ENCODE measurements at regions of chr13 and their contacts with region 1.

Region 1: DNA sequence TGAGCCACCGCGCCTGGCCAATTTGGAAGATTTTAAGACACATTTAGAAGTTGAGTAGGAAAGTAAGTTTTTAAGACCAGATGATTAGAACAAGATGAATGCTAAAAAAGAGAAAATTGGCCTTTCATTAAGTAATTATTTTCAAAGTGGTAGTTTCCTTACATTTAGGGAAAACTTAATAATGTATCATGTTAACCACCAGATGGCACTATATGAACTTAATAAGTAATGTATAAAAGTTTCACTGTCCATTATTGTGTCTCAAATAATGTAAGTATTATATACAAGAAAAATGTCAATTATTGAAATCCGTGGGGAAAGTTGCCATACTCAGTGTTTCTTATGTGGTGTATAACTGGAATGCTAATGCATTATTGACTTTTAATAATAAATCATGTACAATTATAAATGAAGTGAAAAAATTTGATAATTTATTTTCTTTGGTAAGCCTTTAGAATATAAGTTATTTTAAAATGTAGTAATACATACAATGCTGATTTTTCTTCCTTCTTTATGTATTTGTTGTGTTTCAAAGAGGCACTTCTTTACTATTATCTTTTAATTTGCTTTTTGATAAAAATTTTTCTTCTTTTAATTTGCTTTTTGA is 29.2 kb downstream of the COG6 start:
- DNase-seq: no peak
- ATAC-seq: no peak
- H3K4me3 ChIP-seq: no peak overlapping the region
- H3K27ac ChIP-seq: no peak overlapping the region
- H3K4me1 ChIP-seq: no peaks in the 10 kb centered on the region
- H3K27me3 ChIP-seq: no peaks in the 10 kb centered on the region
- CTCF ChIP-seq: peak; percentile 50

Region 2: GRCh38 chr13:39632994-39633393 is 51.6 kb before region 1 on chr13:
- intact Hi-C with region 1: loop called in 1 of 2 experiments (anchors 2 kb)
- DNase-seq: no peak
- ATAC-seq: no peak
- H3K4me3 ChIP-seq: no peak overlapping the region
- H3K27ac ChIP-seq: no peak overlapping the region
- H3K4me1 ChIP-seq: no peaks in the 10 kb centered on the region
- H3K27me3 ChIP-seq: peaks cover 0 to 5% (median 0%) of the 10 kb centered on the region in 3 donors
- CTCF ChIP-seq: no peak

Region 3: DNA sequence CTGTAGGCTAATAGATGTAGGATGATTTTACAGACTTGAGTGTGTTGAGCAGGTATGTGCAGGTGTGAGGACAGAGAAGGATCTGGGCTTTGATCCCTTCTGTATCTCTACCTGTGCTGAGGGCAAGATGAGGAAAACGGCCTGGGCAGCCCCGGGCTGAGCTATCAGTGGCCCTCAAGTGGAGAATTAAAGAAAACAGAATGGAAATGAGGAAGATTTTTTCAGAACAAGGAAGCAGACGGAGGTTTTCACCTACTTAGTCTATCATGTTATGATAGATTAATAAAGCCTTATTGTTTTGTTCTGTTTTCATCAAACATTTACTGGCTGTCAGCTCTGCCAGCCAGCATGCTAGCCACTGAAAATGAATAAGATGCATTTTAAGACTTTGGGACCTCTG is 1004.1 kb after region 1 on chr13:
- intact Hi-C with region 1: loop called (anchors 5 kb)
- DNase-seq: no peak
- ATAC-seq: no peak
- H3K4me3 ChIP-seq: no peak overlapping the region
- H3K27ac ChIP-seq: no peak overlapping the region
- H3K4me1 ChIP-seq: no peaks in the 10 kb centered on the region
- H3K27me3 ChIP-seq: no peaks in the 10 kb centered on the region
- CTCF ChIP-seq: no peak

Region 4: DNA sequence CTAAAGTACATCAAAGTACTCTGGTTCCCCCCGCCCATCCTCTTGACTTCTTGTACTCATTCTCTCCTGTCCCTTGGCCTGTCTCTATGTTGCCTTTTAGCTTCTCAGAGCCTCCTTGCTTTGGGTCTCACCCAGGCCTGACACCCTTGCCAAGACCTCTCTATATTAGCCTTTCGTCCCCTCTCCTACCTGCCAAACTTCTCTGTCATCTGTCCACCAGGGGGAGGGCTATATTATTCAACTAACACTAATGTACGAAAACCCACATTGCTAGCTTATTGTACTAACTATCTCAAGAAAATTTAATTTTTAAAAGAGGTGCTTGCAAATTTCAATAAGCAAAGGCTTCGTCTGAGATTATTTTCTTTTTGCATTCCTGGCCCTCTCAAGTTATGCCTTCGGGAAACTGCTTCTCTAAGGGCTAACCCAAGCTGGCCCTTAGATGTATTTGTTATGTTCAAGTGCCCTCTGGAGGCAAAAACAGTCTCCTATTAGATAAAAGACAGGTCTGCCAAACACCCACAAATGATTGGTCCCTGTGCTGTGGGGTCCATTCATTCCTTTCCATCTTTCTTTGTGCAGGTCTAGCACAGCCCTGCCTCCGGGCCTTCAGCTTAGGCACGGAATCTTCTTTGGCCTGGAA is 1092.7 kb after region 1 on chr13:
- intact Hi-C with region 1: loop called in 1 of 2 experiments (anchors 2 kb)
- DNase-seq: no peak
- ATAC-seq: peak; percentile 83 to 97 (median 88)
- H3K4me3 ChIP-seq: peak overlapping the region; percentile 57
- H3K27ac ChIP-seq: no peak overlapping the region
- H3K4me1 ChIP-seq: no peaks in the 10 kb centered on the region
- H3K27me3 ChIP-seq: no peaks in the 10 kb centered on the region
- CTCF ChIP-seq: peak; percentile 69